Gastrocnemius medialis (tissue), 4 donors: ENCODE measurements at regions of chr5 and their contacts with region 1.

Region 1: GRCh38 chr5:11247224-11247623 is 486.2 kb upstream of the DAP start:
- DNase-seq: no peak
- ATAC-seq: no peak
- H3K4me3 ChIP-seq: no peak overlapping the region
- H3K27ac ChIP-seq: no peak overlapping the region
- H3K4me1 ChIP-seq: no peaks in the 10 kb centered on the region
- H3K27me3 ChIP-seq: no peaks in the 10 kb centered on the region
- CTCF ChIP-seq: no peak
- POLR2A ChIP-seq: no peak

Region 2: GRCh38 chr5:10621832-10622231 is 625.4 kb before region 1 on chr5:
- in situ Hi-C with region 1: no loop called
- intact Hi-C with region 1: no loop called
- DNase-seq: no peak
- ATAC-seq: no peak
- H3K4me3 ChIP-seq: no peak overlapping the region
- H3K27ac ChIP-seq: no peak overlapping the region
- H3K4me1 ChIP-seq: peaks cover 4 to 10% of the 10 kb centered on the region in 2 donors
- H3K27me3 ChIP-seq: no peaks in the 10 kb centered on the region
- CTCF ChIP-seq: no peak
- POLR2A ChIP-seq: no peak

Region 3: GRCh38 chr5:11182441-11183268 is 64.6 kb before region 1 on chr5:
- in situ Hi-C with region 1: no loop called
- intact Hi-C with region 1: loop called (anchors 2 kb)
- DNase-seq: no peak
- ATAC-seq: no peak
- H3K4me3 ChIP-seq: no peak overlapping the region
- H3K27ac ChIP-seq: no peak overlapping the region
- H3K4me1 ChIP-seq: no peaks in the 10 kb centered on the region
- H3K27me3 ChIP-seq: no peaks in the 10 kb centered on the region
- CTCF ChIP-seq: no peak
- POLR2A ChIP-seq: no peak

Region 4: DNA sequence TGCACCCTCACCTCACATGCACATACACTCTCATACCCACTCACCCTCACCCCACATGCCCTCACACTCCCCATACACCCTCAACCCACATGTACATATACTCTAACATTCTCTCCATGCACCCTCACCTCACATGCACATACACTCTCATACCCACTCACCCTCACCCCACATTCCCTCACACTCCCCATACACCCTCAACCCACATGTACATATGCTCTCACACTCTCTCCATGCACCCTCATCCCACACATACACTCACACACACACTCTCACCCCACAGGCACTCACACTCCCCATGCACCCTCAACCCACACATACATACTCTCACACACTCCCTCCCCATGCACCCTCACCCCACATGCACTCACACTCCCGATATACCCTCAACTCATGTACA is 64.0 kb after region 1 on chr5:
- in situ Hi-C with region 1: no loop called
- intact Hi-C with region 1: no loop called
- DNase-seq: no peak
- ATAC-seq: no peak
- H3K4me3 ChIP-seq: no peak overlapping the region
- H3K27ac ChIP-seq: no peak overlapping the region
- H3K4me1 ChIP-seq: no peaks in the 10 kb centered on the region
- H3K27me3 ChIP-seq: no peaks in the 10 kb centered on the region
- CTCF ChIP-seq: no peak
- POLR2A ChIP-seq: no peak